ENCODE measurements at regions of chr6 and their contacts with region 1.

Region 1: DNA sequence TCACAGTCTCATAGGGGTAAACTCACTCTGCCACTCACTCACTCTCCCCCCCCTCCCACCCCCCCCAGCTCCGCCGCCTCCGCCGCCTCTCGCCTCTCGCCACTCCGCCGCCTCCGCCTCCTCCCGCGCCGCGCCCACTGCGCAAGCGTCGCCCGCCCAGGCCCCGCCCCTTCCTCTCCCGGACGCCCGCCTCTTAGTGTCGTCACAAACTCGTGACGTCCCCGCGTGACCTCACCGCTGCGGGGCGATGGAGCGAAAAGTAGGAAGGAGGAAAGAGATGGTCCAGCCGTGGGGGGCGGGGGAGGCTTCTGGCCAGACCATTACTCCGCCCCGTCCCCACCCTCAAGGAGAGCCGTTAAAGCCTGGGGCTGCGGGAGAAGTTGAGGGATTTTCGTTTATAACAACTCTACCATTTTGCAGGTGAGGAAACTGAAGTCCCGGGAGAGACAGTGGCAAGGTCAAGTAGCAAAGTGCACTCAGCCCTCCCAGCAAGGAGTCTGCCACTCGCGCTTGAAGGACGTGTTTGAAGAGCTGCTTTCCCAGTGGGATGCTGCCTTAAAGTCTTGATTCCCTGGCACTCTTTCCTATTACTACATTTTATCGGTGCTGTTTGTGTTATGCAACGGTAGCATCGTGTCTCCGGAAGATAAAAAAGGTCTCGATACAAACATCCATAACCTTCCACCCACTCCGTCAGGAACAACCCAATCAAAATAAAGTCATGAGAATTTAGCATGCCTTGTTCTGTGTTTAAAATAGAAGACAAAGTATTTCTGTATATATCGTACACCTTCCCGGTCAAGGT is at the start of gene ILRUN:
- DNase-seq: peak; percentile 95
- H3K4me3 ChIP-seq: peak within 1 kb of the TSS; percentile 89 to 94
- H3K27ac ChIP-seq: peak within 1 kb of the TSS; percentile 93 to 95
- H3K4me1 ChIP-seq: peaks cover 4% of the 10 kb centered on the region
- H3K27me3 ChIP-seq: no peaks in the 10 kb centered on the region
- CTCF ChIP-seq: peak in 1 of 4 experiments; percentile 20
- POLR2A ChIP-seq: peak; percentile 90
- total RNA-seq, gene ILRUN: 57.4 to 93.6 TPM

Region 2: GRCh38 chr6:32785781-32786533 is 1911.0 kb before region 1 on chr6:
- intact Hi-C with region 1: no loop called
- DNase-seq: peak; percentile 38
- H3K4me3 ChIP-seq: no peak overlapping the region
- H3K27ac ChIP-seq: no peak overlapping the region
- H3K4me1 ChIP-seq: no peaks in the 10 kb centered on the region
- H3K27me3 ChIP-seq: no peaks in the 10 kb centered on the region
- CTCF ChIP-seq: peak in 3 of 4 experiments; percentile 41 to 55 (median 44)
- POLR2A ChIP-seq: no peak

Region 3: GRCh38 chr6:34526992-34527728 is 169.8 kb before region 1 on chr6:
- intact Hi-C with region 1: loop called (anchors 10 kb)
- DNase-seq: peak; percentile 95
- H3K4me3 ChIP-seq: peak overlapping the region in 1 of 2 donors; percentile 11
- H3K27ac ChIP-seq: peak overlapping the region; percentile 14 to 46
- H3K4me1 ChIP-seq: no peaks in the 10 kb centered on the region
- H3K27me3 ChIP-seq: no peaks in the 10 kb centered on the region
- CTCF ChIP-seq: peak; percentile 70 to 91 (median 78)
- POLR2A ChIP-seq: peak; percentile 4

Region 4: GRCh38 chr6:34656378-34657036 is 40.4 kb before region 1 on chr6:
- intact Hi-C with region 1: loop called (anchors 5 kb)
- DNase-seq: peak; percentile 26
- H3K4me3 ChIP-seq: peak overlapping the region; percentile 6 to 27
- H3K27ac ChIP-seq: peak overlapping the region; percentile 80 to 86
- H3K4me1 ChIP-seq: peaks cover 15% of the 10 kb centered on the region
- H3K27me3 ChIP-seq: no peaks in the 10 kb centered on the region
- CTCF ChIP-seq: no peak
- POLR2A ChIP-seq: no peak

Region 5: GRCh38 chr6:34757687-34758274 is 60.8 kb after region 1 on chr6:
- intact Hi-C with region 1: loop called (anchors 1 kb)
- DNase-seq: no peak
- H3K4me3 ChIP-seq: peak overlapping the region; percentile 50 to 56
- H3K27ac ChIP-seq: peak overlapping the region; percentile 94 to 96
- H3K4me1 ChIP-seq: no peaks in the 10 kb centered on the region
- H3K27me3 ChIP-seq: no peaks in the 10 kb centered on the region
- CTCF ChIP-seq: no peak
- POLR2A ChIP-seq: no peak

Measured in prostate gland (tissue), 2 donors.